AG04449 (cell line): ENCODE measurements at regions of chr17 and their contacts with region 1.

Region 1: GRCh38 chr17:56715613-56716357 is 117.9 kb downstream of the C17orf67 start:
- DNase-seq: no peak
- H3K4me3 ChIP-seq: no peak overlapping the region
- CTCF ChIP-seq: peak; percentile 68

Region 2: DNA sequence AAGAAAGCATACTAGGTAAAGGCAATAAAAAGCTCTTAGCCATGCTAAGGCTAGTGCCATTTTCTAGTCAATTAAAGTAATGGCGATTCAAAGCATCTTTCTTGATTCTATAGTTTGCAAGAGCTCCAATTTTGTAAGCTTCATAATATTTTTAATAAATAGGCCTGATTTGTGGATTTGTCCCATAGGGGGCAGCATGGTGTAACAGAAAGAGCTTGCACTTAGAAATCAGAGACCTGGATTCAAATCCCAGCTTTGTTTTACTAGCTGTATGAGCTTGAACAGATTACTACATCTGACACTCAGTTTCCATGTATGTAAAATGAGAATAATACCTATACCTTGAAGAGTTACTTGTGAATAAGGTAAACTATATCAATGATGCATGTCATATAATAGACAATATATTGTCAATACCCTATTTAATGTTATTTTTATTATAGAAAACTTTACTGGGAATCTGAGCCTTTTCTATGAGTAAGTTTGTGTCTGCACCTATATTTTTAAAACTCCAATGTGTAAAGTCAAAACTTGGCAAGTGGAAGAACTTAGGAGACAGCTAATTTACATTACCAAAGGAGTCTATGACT is 215.9 kb before region 1 on chr17:
- CTCF ChIA-PET with region 1: interaction called, 49 read pairs
- POLR2A ChIA-PET with region 1: no interaction called
- DNase-seq: no peak
- H3K4me3 ChIP-seq: no peak overlapping the region
- CTCF ChIP-seq: peak; percentile 23

Region 3: DNA sequence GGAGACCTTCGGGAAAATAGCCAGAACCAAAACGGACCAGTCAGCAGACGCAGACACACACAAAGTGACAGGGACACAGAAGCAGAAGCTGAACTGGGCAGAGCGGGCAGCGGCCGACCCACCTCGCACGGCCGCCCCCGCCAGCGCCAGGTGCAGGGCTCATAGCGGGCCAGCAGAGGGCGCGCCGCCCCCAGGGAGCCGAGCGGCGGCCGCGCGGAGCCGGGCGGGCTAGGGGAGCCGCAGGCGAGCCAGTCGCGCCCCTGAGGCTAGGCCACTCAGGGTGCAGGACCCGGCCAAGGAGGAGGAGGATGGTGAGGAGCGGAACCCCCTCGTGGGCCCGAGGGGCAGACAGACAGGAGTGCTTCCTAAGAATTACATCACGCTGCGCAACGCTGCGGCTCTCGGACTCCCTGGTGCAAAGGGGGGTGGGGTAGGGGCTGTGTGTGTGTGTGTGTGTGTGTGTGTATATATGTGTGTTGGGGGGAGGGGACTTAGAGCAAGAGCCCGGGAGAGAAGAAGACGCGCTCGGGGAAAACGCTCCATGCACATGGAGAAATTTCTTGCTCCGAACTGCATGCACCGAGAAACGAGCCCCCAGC is 123.2 kb before region 1 on chr17:
- CTCF ChIA-PET with region 1: interaction called, 265 read pairs
- POLR2A ChIA-PET with region 1: interaction called, 3 read pairs
- DNase-seq: no peak
- H3K4me3 ChIP-seq: peak overlapping the region; percentile 63
- CTCF ChIP-seq: peak; percentile 76

Region 4: DNA sequence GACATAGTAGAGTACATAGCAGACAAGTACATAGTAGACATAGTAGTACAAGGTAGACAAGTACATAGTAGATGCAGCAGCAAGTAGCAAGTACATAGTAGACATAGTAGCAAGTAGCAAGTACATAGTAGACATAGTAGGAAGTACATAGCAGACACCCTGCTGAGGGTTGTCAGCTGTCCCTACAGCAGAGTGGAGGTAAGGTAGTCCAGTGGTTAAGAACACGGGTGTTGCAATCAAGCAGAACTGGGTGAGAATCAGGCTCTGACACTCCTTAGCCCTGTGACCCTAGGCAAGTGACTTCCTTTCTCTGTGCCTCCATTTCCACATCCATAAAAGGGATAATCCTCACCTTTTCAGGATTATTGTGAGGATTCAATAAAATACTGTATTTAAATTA is 27.6 kb before region 1 on chr17:
- CTCF ChIA-PET with region 1: interaction called, 32 read pairs
- POLR2A ChIA-PET with region 1: no interaction called
- DNase-seq: no peak
- H3K4me3 ChIP-seq: no peak overlapping the region
- CTCF ChIP-seq: no peak

Region 5: GRCh38 chr17:56727876-56728620 is 12.3 kb after region 1 on chr17:
- CTCF ChIA-PET with region 1: interaction called, 33 read pairs
- POLR2A ChIA-PET with region 1: no interaction called
- DNase-seq: no peak
- H3K4me3 ChIP-seq: no peak overlapping the region
- CTCF ChIP-seq: no peak

Region 6: DNA sequence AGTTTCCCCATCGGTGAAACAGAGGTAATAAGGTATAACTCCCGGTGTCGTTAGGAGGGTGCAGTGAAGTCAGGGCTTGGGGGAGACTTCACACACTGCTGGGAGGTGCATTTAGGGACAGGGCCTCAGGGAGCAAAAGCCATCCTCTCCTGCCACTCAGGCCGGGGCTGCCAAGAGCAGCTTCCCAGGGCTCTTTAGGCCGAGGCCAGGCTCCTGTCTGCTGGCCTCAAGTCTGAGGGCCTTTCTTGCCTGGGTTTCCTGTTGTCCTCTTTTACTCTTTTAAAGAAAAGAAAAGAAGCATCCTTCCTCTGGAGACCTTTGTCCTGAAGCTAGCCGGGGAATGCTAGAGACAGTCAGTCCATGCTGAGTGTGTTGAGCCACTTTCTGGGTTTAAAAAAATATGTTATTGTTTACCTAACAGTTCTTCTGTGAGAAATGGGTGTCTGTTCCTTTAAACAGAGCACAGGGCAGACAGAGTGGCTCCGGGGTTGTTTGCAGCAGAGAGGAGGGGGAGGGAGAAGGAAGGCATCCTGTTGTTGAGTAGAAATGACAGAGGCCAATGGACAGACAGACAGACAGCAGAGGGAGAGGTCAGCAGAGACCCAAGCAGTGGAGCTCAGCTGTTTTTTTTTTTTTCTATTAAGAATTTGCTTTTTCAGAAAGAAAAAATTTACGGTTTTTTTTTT is 38.9 kb after region 1 on chr17:
- CTCF ChIA-PET with region 1: interaction called, 13 read pairs
- POLR2A ChIA-PET with region 1: no interaction called
- DNase-seq: no peak
- H3K4me3 ChIP-seq: no peak overlapping the region
- CTCF ChIP-seq: no peak

Region 7: DNA sequence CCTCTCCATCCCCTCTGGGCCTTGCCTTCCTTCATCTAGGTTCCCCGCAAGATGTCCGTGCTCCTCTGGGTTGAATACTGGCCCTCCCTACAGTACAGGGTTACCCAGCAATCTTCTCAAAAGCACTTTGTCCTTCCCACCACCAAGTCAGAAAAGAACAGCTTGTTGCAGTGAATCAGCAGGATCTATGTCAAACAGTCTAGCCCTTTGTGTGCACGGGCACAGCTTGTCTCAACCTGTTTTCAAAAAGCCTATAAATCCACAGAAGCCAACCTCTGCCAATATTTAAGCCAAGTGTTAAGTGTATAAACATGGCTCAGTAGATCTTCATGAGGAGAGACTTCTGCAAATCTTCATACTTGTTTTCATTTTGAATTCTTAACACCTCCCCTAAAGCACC is 92.7 kb after region 1 on chr17:
- CTCF ChIA-PET with region 1: no interaction called
- POLR2A ChIA-PET with region 1: no interaction called
- DNase-seq: no peak
- H3K4me3 ChIP-seq: no peak overlapping the region
- CTCF ChIP-seq: no peak

Region 8: DNA sequence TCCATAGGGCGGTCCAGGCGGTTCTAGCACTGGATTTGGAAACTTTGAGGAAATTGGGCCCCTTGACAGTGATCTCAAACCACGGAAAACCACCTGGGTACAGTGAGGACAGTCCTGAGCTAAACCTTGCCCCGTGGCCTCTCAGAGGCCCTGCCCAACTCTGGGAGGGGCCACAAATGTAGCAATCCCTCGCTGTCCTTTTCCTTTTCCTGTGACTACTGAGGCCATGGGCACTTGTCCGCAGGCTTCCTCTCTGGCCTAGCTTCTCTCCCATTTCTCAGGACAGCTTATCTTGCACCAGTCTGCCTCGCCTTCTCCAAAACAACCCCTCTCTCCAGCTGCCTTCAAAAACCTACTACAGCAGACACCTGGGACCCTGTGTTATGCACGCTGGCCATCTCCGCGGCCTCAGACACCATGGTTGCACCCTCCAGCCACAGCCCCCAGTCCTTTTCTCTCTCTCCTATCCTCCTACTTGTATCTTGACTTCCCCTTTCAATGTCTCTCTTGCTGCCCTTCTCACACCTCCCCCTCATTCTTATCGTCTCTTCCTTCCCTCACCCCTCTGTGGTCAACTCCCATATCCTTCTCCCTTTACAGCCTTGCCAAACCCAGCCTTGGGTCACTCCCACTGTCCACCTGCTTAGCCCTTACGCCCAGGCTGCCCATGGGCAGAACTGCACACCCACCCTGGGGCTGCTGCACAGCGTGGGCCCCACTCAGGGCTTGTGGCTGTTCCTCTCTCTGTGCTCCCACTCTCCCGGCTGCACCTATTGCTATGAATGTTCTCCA is 269.8 kb after region 1 on chr17:
- CTCF ChIA-PET with region 1: no interaction called
- POLR2A ChIA-PET with region 1: no interaction called
- DNase-seq: no peak
- H3K4me3 ChIP-seq: no peak overlapping the region
- CTCF ChIP-seq: no peak